A549 (cell line): ENCODE measurements at regions of chr13 and their contacts with region 1.

Region 1: DNA sequence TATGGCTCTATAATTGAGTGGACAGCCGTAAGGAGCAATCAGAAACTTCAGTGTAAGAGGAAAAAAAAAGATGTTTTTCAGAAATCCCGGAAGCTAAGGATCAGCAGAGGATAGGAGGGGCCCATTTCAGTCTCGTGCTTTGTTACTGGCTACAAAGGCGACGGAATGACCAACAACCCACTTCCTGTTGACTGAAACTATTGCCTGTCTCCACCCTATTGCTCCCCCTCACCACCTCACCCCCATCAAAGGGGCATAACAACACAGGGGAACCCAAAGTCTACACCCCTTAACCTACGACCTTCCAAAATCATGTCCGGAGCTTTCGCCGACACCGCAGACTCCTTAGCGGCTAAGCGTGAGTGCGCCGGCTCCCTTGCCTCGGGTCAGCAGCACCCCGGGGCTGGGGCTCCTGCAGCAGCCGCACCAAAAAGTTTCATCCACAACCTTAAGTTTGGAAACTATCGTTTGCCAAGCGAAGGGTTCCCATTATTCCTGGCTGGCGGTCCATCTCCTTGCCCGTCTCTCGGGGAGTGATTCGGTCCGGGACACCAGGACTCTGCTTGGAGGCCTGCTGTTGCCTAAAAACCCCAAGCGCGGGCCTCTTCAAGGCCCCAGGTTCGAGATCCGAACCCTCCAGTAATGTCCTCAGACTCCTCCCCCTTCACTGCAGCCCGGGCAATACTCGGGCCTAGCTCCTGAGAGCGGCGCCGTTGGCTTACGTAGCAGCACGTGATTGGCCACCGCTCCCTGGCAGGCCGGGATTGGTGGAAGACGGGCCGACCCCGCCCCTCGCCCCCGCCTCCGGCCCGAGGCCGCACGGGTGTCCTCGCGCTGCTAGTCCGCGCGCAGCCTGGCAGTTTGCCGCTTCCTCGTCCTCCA is at the start of gene TPP2:
- DNase-seq: peak; percentile 92 to 97
- ATAC-seq: peak; percentile 92 to 94
- H3K4me3 ChIP-seq: peak within 1 kb of the TSS; percentile 95
- H3K27ac ChIP-seq: peak within 1 kb of the TSS; percentile 91 to 98
- H3K4me1 ChIP-seq: peaks cover 13% of the 10 kb centered on the region; the same call in 2 of the 3 replicates
- CTCF ChIP-seq: no peak
- EP300 ChIP-seq: no peak
- POLR2A ChIP-seq: no peak; the same call in none of the 2 replicates
- RAD21 ChIP-seq: no peak
- polyA plus RNA-seq, gene TPP2: 22.5 and 28.4 TPM in 2 replicates

Region 2: GRCh38 chr13:102580552-102581169 is 15.7 kb before region 1 on chr13:
- CTCF ChIA-PET with region 1: interaction called, 18 read pairs
- POLR2A ChIA-PET with region 1: no interaction called
- DNase-seq: peak in 1 of 2 experiments; percentile 65
- ATAC-seq: peak; percentile 66 to 90; a peak in 3 of 6 replicates
- H3K4me3 ChIP-seq: no peak overlapping the region
- H3K27ac ChIP-seq: no peak overlapping the region
- H3K4me1 ChIP-seq: no peaks in the 10 kb centered on the region
- CTCF ChIP-seq: peak; percentile 66
- EP300 ChIP-seq: no peak
- POLR2A ChIP-seq: no peak
- RAD21 ChIP-seq: peak; percentile 71 to 77

Region 3: GRCh38 chr13:102606537-102607309 is 10.3 kb after region 1 on chr13:
- CTCF ChIA-PET with region 1: interaction called, 5 read pairs
- POLR2A ChIA-PET with region 1: interaction called, 10 read pairs
- DNase-seq: no peak
- ATAC-seq: no peak
- H3K4me3 ChIP-seq: no peak overlapping the region
- H3K27ac ChIP-seq: no peak overlapping the region
- H3K4me1 ChIP-seq: peaks cover 7% of the 10 kb centered on the region; the same call in 1 of the 3 replicates
- CTCF ChIP-seq: no peak
- EP300 ChIP-seq: no peak
- POLR2A ChIP-seq: no peak
- RAD21 ChIP-seq: no peak

Region 4: GRCh38 chr13:102724923-102725322 is 128.5 kb after region 1 on chr13:
- CTCF ChIA-PET with region 1: interaction called, 10 read pairs
- POLR2A ChIA-PET with region 1: interaction called, 4 read pairs
- DNase-seq: peak; percentile 17 to 42
- ATAC-seq: peak; percentile 90 to 91
- H3K4me3 ChIP-seq: no peak overlapping the region
- H3K27ac ChIP-seq: no peak overlapping the region
- H3K4me1 ChIP-seq: peaks cover 6% of the 10 kb centered on the region; the same call in 1 of the 3 replicates
- CTCF ChIP-seq: peak; percentile 59
- EP300 ChIP-seq: no peak
- POLR2A ChIP-seq: no peak
- RAD21 ChIP-seq: peak; percentile 66 to 72

Region 5: GRCh38 chr13:102845630-102846260 is 249.4 kb after region 1 on chr13 and contains the start of gene ERCC5:
- CTCF ChIA-PET with region 1: interaction called, 4 read pairs
- POLR2A ChIA-PET with region 1: interaction called, 23 read pairs
- DNase-seq: peak; percentile 28 to 95
- ATAC-seq: peak; percentile 94 to 96
- H3K4me3 ChIP-seq: peak within 1 kb of the TSS; percentile 99
- H3K27ac ChIP-seq: peak within 1 kb of the TSS; percentile 84 to 96
- H3K4me1 ChIP-seq: peaks cover 8% of the 10 kb centered on the region; the same call in 1 of the 3 replicates
- CTCF ChIP-seq: no peak
- EP300 ChIP-seq: no peak
- POLR2A ChIP-seq: peak; percentile 24
- RAD21 ChIP-seq: 0 out of 5 replicates have a peak, but pooled peaks of 1 of the 2 experiments have one; percentile 19
- polyA plus RNA-seq, gene ERCC5: 19.5 and 24.4 TPM in 2 replicates